ENCODE measurements at regions of chrX and their contacts with region 1.

Region 1: GRCh38 chrX:154378782-154379591 is at the start of gene EMD:
- DNase-seq: peak; percentile 97
- H3K4me3 ChIP-seq: peak within 1 kb of the TSS; percentile 81
- H3K4me3 Mint-ChIP-seq: peak within 1 kb of the TSS; percentile 80
- H3K27ac Mint-ChIP-seq: peak within 1 kb of the TSS; percentile 94
- H3K4me1 ChIP-seq: no peaks in the 10 kb centered on the region; the same call in 1 of the 2 replicates
- H3K4me1 Mint-ChIP-seq: peaks cover 6% of the 10 kb centered on the region
- H3K27me3 ChIP-seq: no peaks in the 10 kb centered on the region
- H3K27me3 Mint-ChIP-seq: no peaks in the 10 kb centered on the region
- CTCF ChIP-seq: no peak
- total RNA-seq, gene EMD: 67.2 and 70.1 TPM in 2 replicates

Region 2: DNA sequence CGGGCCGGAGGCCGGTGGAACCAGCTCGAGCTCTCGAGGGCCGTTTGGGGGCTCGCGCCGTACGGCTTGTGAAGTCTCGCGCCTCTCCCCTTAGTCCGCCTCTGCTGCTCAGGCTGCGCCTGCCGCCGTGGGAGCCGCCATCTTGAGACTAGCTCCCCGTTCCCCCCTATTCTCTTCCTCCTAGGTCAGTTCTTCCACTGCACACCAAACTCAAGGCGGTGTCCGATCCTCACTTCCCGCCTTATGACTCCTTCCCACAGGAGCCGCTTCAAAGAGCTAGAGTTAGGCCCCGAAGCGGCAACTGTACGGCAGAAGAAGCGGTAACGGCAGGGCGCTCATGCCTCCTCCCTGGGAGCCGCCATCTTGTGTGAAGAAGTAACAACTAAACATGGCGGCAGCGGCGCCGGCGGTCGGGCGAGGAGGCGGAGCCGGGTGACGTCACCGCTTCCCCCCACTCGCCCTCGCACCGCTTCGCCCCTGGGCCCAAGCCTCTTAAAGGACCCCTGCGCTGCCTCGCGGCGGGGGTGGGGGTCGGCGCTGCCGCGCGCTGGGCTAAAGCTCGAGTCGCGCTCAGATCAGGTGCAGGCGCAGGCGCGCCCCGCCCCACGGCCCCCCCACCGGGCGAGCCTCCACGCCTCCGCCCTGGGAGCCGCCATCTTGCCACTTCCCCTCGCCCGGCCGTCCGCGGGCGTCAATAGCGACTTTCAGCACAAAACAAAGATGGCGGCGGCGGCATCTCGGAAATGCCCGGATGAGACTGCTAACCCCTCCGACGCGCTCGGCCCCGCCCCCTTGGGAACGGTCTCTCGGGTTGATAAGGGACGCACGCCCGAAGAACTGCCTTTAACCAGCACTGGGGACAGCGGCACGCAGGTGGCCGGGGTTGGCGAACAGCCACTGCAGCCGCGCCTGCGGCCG is 407.3 kb before region 1 on chrX and contains the start of gene HCFC1:
- CTCF ChIA-PET with region 1: no interaction called
- POLR2A ChIA-PET with region 1: no interaction called
- intact Hi-C with region 1: loop called (anchors 10 kb)
- DNase-seq: peak; percentile 90 to 91
- H3K4me3 ChIP-seq: peak within 1 kb of the TSS; percentile 73
- H3K4me3 Mint-ChIP-seq: peak within 1 kb of the TSS; percentile 98
- H3K27ac Mint-ChIP-seq: peak within 1 kb of the TSS; percentile 100
- H3K4me1 ChIP-seq: 0 out of 2 replicates have a peak, but pooled peaks cover 8% of the 10 kb centered on the region
- H3K4me1 Mint-ChIP-seq: peaks cover 8% of the 10 kb centered on the region
- H3K27me3 ChIP-seq: no peaks in the 10 kb centered on the region
- H3K27me3 Mint-ChIP-seq: no peaks in the 10 kb centered on the region
- CTCF ChIP-seq: no peak
- total RNA-seq, gene HCFC1: 93.7 and 95.6 TPM in 2 replicates

Region 3: DNA sequence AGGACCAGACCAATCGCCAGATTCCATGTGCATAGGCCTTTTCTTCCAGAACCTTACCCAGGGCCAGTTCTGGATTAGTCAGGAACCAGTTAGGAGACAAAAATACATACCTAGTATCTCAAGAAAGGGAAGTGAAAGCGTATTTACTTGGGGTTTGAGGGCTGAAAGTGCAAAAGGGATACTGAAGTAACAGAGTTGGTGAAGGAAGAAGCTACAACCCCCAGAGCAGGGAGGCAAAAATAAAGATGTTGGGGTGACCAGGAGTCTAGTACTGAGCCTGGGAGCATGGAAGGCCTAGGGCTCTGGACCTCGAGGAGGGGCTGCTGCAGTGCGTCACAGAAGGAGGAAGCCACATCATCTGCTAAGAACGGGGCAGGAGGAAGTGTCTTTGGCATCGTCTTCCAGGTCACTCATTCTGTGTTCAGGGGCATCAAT is 45.1 kb before region 1 on chrX:
- CTCF ChIA-PET with region 1: no interaction called
- POLR2A ChIA-PET with region 1: no interaction called
- intact Hi-C with region 1: no loop called
- DNase-seq: no peak
- H3K4me3 ChIP-seq: no peak overlapping the region
- H3K4me3 Mint-ChIP-seq: no peak overlapping the region
- H3K27ac Mint-ChIP-seq: no peak overlapping the region
- H3K4me1 ChIP-seq: no peaks in the 10 kb centered on the region
- H3K4me1 Mint-ChIP-seq: no peaks in the 10 kb centered on the region
- H3K27me3 ChIP-seq: no peaks in the 10 kb centered on the region
- H3K27me3 Mint-ChIP-seq: no peaks in the 10 kb centered on the region
- CTCF ChIP-seq: no peak

Region 4: GRCh38 chrX:154436983-154437719 is 58.2 kb after region 1 on chrX and contains the start of gene GDI1:
- CTCF ChIA-PET with region 1: no interaction called
- POLR2A ChIA-PET with region 1: no interaction called
- intact Hi-C with region 1: no loop called
- DNase-seq: peak; percentile 56 to 60
- H3K4me3 ChIP-seq: peak within 1 kb of the TSS; percentile 72
- H3K4me3 Mint-ChIP-seq: peak within 1 kb of the TSS; percentile 77
- H3K27ac Mint-ChIP-seq: peak within 1 kb of the TSS; percentile 39
- H3K4me1 ChIP-seq: no peaks in the 10 kb centered on the region
- H3K4me1 Mint-ChIP-seq: no peaks in the 10 kb centered on the region
- H3K27me3 ChIP-seq: no peaks in the 10 kb centered on the region
- H3K27me3 Mint-ChIP-seq: no peaks in the 10 kb centered on the region
- CTCF ChIP-seq: no peak
- total RNA-seq, gene GDI1: 68.7 and 69.5 TPM in 2 replicates

Region 5: DNA sequence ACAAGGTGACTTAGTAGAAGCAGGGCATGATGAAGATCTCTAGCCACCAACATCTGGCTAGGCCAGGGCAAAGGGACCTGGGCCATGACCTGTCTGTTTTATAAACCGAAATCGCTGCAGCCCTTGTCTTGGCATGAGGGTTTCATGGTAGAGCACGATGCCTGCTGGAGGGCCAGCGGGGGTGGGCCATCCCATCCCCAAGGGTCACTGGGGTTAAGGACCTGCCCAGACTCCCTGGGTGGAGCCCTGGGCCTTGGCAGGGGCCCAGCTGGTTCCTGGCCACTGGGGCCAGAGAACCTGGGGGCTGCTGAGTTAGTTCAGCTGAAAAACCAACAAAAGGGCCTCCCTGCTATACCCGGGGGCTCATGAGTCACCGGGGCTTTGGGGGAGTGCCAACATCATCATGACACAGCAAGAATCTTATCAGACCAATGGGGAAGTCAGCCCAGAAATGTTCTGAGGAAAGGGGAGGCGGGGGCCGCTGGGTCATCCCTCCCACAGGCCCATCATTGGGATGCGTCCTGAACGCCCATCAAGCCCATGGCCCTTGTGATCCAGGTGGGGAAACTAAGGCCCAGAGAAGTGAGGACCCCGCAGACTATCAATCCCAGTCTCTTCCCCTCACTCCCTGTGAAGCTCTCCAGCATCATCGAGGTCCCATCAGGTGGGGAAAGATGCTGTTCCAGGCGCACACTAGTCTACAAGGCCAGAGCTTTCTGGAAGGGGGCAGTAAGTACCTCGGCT is 162.9 kb after region 1 on chrX:
- CTCF ChIA-PET with region 1: no interaction called
- POLR2A ChIA-PET with region 1: interaction called, 15 read pairs
- intact Hi-C with region 1: no loop called
- DNase-seq: no peak
- H3K4me3 ChIP-seq: no peak overlapping the region
- H3K4me3 Mint-ChIP-seq: no peak overlapping the region
- H3K27ac Mint-ChIP-seq: peak overlapping the region; percentile 64
- H3K4me1 ChIP-seq: peaks cover 18% of the 10 kb centered on the region
- H3K4me1 Mint-ChIP-seq: no peaks in the 10 kb centered on the region
- H3K27me3 ChIP-seq: no peaks in the 10 kb centered on the region
- H3K27me3 Mint-ChIP-seq: no peaks in the 10 kb centered on the region
- CTCF ChIP-seq: no peak

Measured in Caco-2 (cell line).